Activated T-helper 1 cell treated with anti-CD3 and anti-CD28 coated beads, Interleukin-12 subunit alpha, Interleukin-12 subunit beta, Interleukin-2, Interleukin-4 antibody, amounts not matched to agents 30 ng/mL and 10 ng/mL and 1 ng/mL, durations not matched to agents 14 hours and 24 hours and 36 hours (primary cell): ENCODE measurements at regions of chr14 and their contacts with region 1.

Region 1: DNA sequence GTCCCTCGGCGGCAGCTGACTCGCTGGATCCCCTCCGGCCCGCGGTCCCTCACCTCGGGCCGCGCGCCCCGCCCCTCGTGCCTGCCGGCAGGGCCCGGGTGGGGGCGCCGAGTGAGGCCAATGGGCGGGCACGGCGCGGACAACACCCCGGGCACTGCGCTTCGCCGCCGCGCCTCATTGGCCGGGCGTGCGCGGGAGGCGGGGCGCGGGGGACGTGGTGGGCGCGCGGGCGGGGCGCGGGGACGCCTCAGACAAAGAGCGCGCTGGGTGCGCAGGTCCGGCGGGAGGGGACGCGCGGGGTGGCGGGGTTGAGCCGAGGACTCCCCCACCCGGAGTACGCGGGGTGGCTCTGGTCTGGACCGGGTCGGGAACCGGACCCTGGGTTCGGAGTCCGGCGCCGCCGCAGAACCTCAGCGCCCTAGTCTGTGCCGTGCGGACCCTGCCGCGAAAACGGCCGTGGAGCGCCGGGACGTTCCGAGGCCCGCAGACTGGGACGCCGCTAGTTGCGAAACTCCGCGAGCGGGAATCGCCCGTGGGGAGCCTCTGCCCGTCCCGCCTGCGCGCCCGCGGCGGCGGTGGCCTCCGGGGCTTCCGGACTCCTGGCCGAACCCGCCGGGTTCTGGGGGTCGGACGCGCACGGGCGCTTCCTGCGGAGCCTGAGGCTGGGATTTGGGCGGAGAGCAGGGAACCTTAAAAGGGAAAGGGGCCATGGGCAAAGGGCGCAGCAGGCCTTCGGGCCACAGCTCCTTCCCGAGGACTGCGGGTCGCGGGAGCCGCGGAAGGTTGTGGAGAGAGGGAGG is at the start of gene SLC25A29:
- DNase-seq: peak; percentile 68
- H3K4me3 Mint-ChIP-seq: peak within 1 kb of the TSS; percentile 81
- H3K27ac Mint-ChIP-seq: no peak within 1 kb of the TSS
- H3K4me1 Mint-ChIP-seq: peaks cover 22% of the 10 kb centered on the region
- H3K27me3 Mint-ChIP-seq: peaks cover 23% of the 10 kb centered on the region
- total RNA-seq, gene SLC25A29: 15.9 and 19.1 TPM in 2 replicates

Region 2: GRCh38 chr14:100285021-100285912 is 21.4 kb before region 1 on chr14:
- intact Hi-C with region 1: loop called (anchors 1 kb)
- DNase-seq: peak; percentile 77
- H3K4me3 Mint-ChIP-seq: no peak overlapping the region
- H3K27ac Mint-ChIP-seq: no peak overlapping the region
- H3K4me1 Mint-ChIP-seq: peaks cover 4% of the 10 kb centered on the region
- H3K27me3 Mint-ChIP-seq: no peaks in the 10 kb centered on the region